Posterior cingulate gyrus (tissue), 11 donors: ENCODE measurements at regions of chr2 and their contacts with region 1.

Region 1: DNA sequence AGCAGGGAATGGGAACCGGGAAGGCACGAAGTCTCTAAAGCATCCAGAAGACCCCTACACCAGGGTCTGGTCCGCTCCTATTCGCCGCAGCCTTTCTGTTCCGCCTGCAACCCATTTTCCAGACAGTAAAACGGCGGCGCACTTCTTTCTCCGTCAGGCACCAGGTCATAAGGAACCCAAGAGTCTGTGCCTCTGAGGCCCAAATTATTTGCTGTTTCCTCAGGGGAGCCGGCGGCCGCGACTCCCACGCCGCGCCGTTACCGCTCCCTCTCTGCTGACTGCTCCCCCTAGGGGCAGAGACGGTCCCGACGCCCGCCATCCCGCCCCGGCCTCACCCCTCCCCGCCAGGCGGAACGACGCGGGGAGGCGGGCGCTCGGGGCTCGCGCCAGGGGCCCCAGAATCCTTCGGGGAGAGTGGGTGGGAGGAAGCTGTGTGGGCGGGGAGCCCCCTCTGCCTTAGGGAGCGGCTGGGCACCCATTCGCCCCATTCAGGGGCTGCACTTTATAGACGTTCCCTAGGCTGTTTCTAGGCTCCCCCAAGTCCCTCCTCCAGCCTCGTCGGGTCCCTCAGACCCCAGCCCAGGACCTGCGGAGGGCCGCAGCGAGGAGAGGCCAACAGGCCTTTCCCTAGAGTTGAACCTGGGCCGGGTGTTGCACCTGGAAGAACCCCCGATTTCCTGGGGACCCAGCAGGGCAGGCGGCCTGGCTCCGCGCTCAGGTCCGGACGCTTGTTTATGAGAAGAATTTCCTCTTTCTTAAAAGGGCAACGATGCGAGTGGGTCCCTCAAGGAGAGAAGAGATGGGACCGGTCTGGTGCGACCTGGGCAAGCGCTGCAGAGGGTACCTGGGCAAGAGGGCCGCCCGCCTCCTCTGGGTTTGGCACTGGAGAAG is 3.6 kb upstream of the CTDSP1 start:
- DNase-seq: peak; percentile 90 to 99 (median 93)

Region 2: DNA sequence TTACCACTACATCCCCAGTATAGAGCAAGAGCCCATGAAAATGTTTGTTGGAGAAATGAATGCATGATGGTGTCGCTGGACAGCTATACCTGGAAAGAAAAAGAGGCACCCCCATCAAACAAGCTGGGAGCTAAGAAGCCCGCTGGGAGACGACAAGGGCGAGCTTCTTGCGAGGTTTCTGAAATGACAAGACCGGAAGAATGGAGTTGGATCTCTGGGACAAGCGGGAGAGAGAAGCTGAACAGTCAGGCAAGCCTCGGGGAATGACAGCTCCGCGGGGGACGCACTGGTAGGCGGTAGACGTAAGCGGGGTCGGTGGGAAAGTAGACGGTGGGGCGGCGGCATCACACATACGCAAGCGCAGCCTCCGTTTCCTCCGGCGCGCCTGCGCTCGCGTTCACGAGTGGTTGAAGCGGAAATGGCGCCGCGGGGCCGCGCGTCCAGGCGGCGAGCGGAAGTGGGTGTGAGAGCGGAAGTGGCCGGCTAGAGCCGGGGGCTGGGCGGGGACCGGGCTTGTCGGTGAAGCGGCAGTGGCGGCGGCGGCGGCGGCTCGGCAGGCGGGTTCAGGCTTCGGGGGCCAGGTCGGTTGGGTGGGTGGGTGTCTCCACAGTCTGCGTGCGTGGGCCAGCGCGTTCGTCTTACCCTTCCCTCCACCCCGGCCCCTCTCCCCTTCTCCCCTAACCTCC is 179.2 kb before region 1 on chr2 and contains the start of gene ARPC2:
- intact Hi-C with region 1: loop called (anchors 5 kb)
- DNase-seq: peak; percentile 87 to 99 (median 91)

Region 3: DNA sequence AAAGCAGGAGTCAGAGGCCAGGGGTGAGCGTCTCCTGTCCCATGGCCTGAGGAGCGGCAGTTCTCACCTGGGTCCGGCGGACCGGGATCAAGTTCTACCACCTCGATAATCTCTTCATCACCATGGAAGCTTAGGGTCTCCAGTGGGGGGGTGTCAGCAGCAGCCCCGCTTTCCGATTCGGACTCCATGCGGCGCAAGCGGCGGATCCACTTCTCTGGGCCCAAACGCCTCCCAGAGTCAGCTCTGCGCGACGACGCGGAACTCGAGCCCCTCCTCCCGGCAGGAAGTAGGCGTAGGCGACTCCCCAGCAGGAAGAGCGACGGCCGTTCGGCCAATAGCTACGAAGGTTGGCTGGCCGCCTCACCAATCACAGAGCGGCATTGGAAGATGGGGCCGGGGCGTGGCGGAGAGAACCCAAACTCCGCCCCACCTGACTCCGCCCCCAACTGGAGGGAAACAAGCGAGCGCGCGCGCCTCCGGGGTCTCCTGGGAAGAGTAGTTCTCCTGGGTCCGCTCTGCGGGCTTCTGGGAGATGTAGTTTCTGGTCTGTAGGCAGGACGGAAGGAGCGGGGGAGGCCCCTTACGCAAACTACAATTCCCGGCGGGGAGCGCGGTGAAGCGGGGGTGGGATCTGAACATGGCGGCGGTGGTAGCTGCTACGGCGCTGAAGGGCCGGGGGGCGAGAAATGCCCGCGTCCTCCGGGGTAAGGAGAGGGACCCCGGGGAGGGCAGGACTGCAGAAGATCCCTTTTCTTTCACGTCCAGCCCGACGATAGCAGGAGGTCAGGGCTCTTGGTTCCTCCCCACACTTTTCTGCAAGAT is 125.9 kb before region 1 on chr2 and contains the starts of genes AAMP and PNKD:
- intact Hi-C with region 1: loop called (anchors 2 kb)
- DNase-seq: peak; percentile 100

Region 4: DNA sequence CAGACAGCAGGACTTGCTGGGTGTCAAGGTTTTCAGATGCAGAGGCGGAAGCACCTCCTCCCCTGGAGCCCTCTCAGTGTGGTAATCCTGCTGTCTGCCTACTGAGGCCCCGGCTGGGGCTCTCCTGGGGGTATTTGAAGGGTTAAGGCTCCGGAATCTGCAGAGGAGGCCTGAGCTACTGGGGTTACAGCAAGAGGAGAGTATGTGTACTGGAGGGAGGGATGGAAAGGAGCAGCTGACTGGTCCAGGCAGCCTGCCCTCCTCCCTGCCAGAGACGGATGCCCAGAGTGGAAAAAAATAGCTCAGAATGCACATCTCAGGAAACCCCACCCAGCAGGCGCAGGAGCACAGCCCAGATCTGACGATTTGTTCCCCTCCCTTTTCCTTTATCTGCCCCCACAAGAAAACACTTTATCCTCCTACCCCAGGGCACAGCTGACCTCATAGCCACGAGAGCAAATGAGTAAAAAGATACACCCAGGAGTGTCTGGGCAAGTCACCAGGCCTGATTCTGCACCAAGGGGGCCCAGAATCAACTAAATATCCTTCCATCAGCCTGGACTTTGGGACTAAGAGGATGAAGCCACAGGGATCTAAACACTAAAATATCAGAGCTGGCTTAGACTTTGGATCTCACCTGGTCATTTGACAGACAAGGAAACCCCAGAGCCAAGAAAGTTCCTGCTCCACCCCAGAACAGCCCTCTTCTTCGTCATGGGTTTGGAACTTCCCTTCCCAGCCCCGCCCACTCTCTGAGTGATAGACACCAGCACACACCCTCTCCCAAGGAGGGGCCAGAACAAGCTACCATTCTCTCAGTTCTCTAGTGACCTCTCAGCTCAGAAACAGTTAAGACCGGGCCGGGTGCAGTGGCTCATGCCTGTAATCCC is 109.2 kb before region 1 on chr2:
- intact Hi-C with region 1: loop called (anchors 5 kb)
- DNase-seq: peak; percentile 69 to 97 (median 80)

Region 5: DNA sequence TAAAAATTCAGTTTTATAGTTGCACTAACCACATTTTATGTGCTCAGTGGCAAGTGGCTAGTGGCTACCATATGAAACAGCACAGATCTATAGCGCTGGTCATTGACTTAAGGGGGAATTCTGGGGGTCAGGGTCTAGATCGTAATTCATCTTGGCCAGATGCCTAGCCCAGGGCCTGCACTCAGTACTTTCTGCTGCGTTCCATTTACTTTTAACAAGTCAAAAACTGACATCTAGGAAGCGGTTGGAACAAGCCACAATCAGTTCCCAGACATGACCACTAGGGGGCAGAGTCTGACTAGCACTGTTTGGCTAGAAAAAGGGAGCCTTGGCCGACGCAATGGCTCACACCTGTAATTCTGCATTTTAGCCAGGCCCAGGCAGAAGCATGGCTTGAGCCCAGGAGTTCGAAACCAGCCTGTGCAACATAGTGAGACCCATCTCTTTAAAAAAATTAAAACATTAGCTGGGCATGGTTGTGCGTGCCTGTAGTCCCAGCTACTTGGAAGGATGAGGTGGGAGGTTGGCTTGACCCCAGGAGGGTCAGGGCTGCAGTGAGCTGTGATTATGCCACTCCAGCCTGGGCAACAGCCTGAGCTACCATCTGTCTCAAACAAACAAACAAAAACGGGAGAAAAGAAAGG is 94.7 kb before region 1 on chr2:
- intact Hi-C with region 1: loop called (anchors 5 kb)
- DNase-seq: peak; percentile 50 to 93 (median 81)

Region 6: GRCh38 chr2:218438601-218438995 is 42.6 kb after region 1 on chr2:
- intact Hi-C with region 1: no loop called
- DNase-seq: no peak

Region 7: GRCh38 chr2:218727502-218728165 is 331.6 kb after region 1 on chr2:
- intact Hi-C with region 1: no loop called
- DNase-seq: no peak